ENCODE measurements at regions of chr20 and their contacts with region 1.

Region 1: GRCh38 chr20:21640561-21641182 is 64.8 kb upstream of the PAX1 start:
- DNase-seq: peak; percentile 62 to 71
- H3K4me3 ChIP-seq: no peak overlapping the region
- H3K4me3 Mint-ChIP-seq: no peak overlapping the region
- H3K27ac Mint-ChIP-seq: no peak overlapping the region
- H3K4me1 ChIP-seq: no peaks in the 10 kb centered on the region
- H3K4me1 Mint-ChIP-seq: no peaks in the 10 kb centered on the region
- H3K27me3 ChIP-seq: no peaks in the 10 kb centered on the region
- H3K27me3 Mint-ChIP-seq: peaks cover 13% of the 10 kb centered on the region
- CTCF ChIP-seq: peak; percentile 42 to 83

Region 2: DNA sequence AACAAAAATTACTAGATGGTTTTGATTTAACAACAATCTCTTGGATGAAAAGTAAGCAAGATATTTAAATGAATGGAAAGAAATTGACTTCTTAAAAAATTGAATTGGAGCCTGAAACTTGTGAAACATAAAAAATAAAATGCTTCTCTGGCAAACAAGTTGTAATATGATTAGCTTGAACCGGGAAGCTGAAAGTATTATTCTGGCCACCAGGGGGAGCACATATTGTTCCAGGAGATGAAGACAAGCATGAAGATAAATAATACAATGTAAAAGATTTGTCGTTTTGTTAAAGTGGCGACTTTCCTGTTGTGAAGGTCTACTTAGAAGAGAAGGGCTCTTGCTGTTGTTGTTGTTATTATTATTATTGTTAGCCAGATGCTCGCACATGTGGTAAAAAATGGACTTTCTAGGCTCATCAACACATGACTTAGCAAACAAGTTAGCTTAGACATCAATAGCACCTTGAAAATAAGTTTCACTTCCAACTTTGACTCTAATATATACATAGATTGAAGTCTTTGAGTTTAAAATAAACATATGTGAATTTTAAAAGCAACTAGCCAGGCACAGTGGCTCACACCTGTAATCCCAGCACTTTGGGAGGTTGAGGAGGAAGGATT is 79.0 kb after region 1 on chr20:
- CTCF ChIA-PET with region 1: interaction called, 3 read pairs
- POLR2A ChIA-PET with region 1: no interaction called
- intact Hi-C with region 1: loop called (anchors 5 kb)
- DNase-seq: peak; percentile 72 to 81
- H3K4me3 ChIP-seq: no peak overlapping the region
- H3K4me3 Mint-ChIP-seq: no peak overlapping the region
- H3K27ac Mint-ChIP-seq: no peak overlapping the region
- H3K4me1 ChIP-seq: peaks cover 6% of the 10 kb centered on the region
- H3K4me1 Mint-ChIP-seq: no peaks in the 10 kb centered on the region
- H3K27me3 ChIP-seq: no peaks in the 10 kb centered on the region
- H3K27me3 Mint-ChIP-seq: peaks cover 8% of the 10 kb centered on the region
- CTCF ChIP-seq: peak; percentile 70 to 90

Region 3: GRCh38 chr20:21767739-21768223 is 127.1 kb after region 1 on chr20:
- CTCF ChIA-PET with region 1: interaction called, 5 read pairs
- POLR2A ChIA-PET with region 1: no interaction called
- intact Hi-C with region 1: loop called (anchors 5 kb)
- DNase-seq: peak; percentile 88 to 92
- H3K4me3 ChIP-seq: peak overlapping the region; percentile 34
- H3K4me3 Mint-ChIP-seq: peak overlapping the region; percentile 65
- H3K27ac Mint-ChIP-seq: peak overlapping the region; percentile 63
- H3K4me1 ChIP-seq: peaks cover 5% of the 10 kb centered on the region; the same call in 1 of the 2 replicates
- H3K4me1 Mint-ChIP-seq: peaks cover 6% of the 10 kb centered on the region
- H3K27me3 ChIP-seq: no peaks in the 10 kb centered on the region
- H3K27me3 Mint-ChIP-seq: no peaks in the 10 kb centered on the region
- CTCF ChIP-seq: peak; percentile 86 to 92

Region 4: GRCh38 chr20:21832442-21833385 is 192.0 kb after region 1 on chr20:
- CTCF ChIA-PET with region 1: no interaction called
- POLR2A ChIA-PET with region 1: no interaction called
- intact Hi-C with region 1: loop called (anchors 1 kb)
- DNase-seq: peak in 1 of 2 experiments; percentile 16
- H3K4me3 ChIP-seq: no peak overlapping the region
- H3K4me3 Mint-ChIP-seq: no peak overlapping the region
- H3K27ac Mint-ChIP-seq: peak overlapping the region; percentile 27
- H3K4me1 ChIP-seq: no peaks in the 10 kb centered on the region
- H3K4me1 Mint-ChIP-seq: no peaks in the 10 kb centered on the region
- H3K27me3 ChIP-seq: no peaks in the 10 kb centered on the region
- H3K27me3 Mint-ChIP-seq: peaks cover 15% of the 10 kb centered on the region
- CTCF ChIP-seq: peak in 1 of 2 experiments; percentile 28

Region 5: DNA sequence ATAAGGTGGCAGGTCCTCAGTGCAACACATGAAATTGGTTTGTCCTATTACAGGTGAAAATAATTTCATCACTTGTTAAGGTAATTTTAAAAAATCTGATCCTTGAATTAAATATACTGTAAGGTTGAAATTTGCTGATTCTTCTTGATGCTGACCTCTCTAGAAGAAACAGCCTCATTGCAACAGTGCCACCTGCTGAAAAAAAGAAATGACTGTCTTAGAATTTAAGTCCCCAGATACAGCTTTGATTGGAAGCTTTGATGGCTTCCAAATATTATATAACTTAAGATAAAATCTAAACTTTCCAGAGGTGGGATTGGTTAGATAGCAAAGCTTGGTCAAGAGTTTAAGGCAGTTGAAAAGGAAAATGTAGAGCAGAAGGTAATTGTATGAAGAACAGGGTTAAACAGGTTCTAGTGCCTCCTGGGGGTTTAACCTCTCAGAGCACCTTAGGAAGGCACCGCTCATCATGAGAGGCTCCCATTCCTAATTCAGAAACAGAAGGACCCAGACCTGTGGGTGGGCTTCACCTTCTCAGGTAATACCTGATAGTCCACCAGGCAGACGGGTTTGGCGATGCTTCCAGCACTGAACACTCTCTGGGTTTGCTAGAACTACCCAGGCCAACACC is 465.8 kb after region 1 on chr20:
- CTCF ChIA-PET with region 1: interaction called, 7 read pairs
- POLR2A ChIA-PET with region 1: no interaction called
- intact Hi-C with region 1: loop called (anchors 1 kb)
- DNase-seq: peak in 1 of 2 experiments; percentile 39
- H3K4me3 ChIP-seq: no peak overlapping the region
- H3K4me3 Mint-ChIP-seq: no peak overlapping the region
- H3K27ac Mint-ChIP-seq: no peak overlapping the region
- H3K4me1 ChIP-seq: no peaks in the 10 kb centered on the region
- H3K4me1 Mint-ChIP-seq: no peaks in the 10 kb centered on the region
- H3K27me3 ChIP-seq: no peaks in the 10 kb centered on the region
- H3K27me3 Mint-ChIP-seq: peaks cover 27% of the 10 kb centered on the region
- CTCF ChIP-seq: peak; percentile 55 to 71

Region 6: GRCh38 chr20:22312744-22313346 is 672.2 kb after region 1 on chr20:
- CTCF ChIA-PET with region 1: no interaction called
- POLR2A ChIA-PET with region 1: no interaction called
- intact Hi-C with region 1: loop called (anchors 1 kb)
- DNase-seq: peak in 1 of 2 experiments; percentile 44
- H3K4me3 ChIP-seq: no peak overlapping the region
- H3K4me3 Mint-ChIP-seq: no peak overlapping the region
- H3K27ac Mint-ChIP-seq: no peak overlapping the region
- H3K4me1 ChIP-seq: no peaks in the 10 kb centered on the region
- H3K4me1 Mint-ChIP-seq: peaks cover 6% of the 10 kb centered on the region
- H3K27me3 ChIP-seq: no peaks in the 10 kb centered on the region
- H3K27me3 Mint-ChIP-seq: peaks cover 12% of the 10 kb centered on the region
- CTCF ChIP-seq: peak; percentile 66 to 73